Left cardiac atrium (tissue), 4 donors: ENCODE measurements at regions of chr15 and their contacts with region 1.

Region 1: GRCh38 chr15:90154861-90155626 is 46.1 kb upstream of the SEMA4B start:
- DNase-seq: no peak
- ATAC-seq: no peak

Region 2: GRCh38 chr15:90221246-90221900 is 66.3 kb after region 1 on chr15:
- intact Hi-C with region 1: loop called in 1 of 2 experiments (anchors 5 kb)
- DNase-seq: peak; percentile 78
- ATAC-seq: peak; percentile 82 to 91